A673 (cell line): ENCODE measurements at regions of chr7 and their contacts with region 1.

Region 1: GRCh38 chr7:120725376-120726039 is 132.4 kb downstream of the TSPAN12 start:
- DNase-seq: peak; percentile 65
- H3K4me3 ChIP-seq: no peak overlapping the region
- H3K27ac ChIP-seq: no peak overlapping the region
- H3K4me1 ChIP-seq: no peaks in the 10 kb centered on the region
- H3K27me3 ChIP-seq: no peaks in the 10 kb centered on the region
- CTCF ChIP-seq: peak; percentile 70

Region 2: DNA sequence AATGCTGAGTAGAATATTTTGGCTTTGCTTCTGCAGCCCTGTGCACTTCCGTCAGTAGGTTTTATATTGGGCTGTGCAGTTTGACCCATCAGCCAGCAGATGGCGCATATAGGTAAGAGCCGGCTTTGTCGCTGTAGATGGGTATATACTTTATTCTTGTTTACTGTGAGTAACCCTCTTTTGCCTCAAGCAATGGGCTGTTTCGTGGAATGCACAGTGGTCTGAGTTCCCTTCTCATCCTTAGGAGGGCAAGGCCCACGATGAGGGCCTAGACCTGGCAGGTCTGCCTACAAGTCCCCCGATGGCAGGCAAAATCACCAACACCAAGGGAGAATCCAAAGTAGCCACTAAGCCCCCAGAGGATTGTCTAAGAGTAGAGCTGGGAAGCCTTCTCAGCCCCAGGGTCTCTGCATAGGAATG is 1455.5 kb before region 1 on chr7:
- CTCF ChIA-PET with region 1: no interaction called
- POLR2A ChIA-PET with region 1: no interaction called
- intact Hi-C with region 1: loop called (anchors 10 kb)
- DNase-seq: peak; percentile 78
- H3K4me3 ChIP-seq: no peak overlapping the region
- H3K27ac ChIP-seq: no peak overlapping the region
- H3K4me1 ChIP-seq: no peaks in the 10 kb centered on the region
- H3K27me3 ChIP-seq: no peaks in the 10 kb centered on the region
- CTCF ChIP-seq: peak; percentile 88

Region 3: GRCh38 chr7:119935418-119936025 is 790.0 kb before region 1 on chr7:
- CTCF ChIA-PET with region 1: no interaction called
- POLR2A ChIA-PET with region 1: no interaction called
- intact Hi-C with region 1: loop called (anchors 10 kb)
- DNase-seq: peak; percentile 52
- H3K4me3 ChIP-seq: no peak overlapping the region
- H3K27ac ChIP-seq: no peak overlapping the region
- H3K4me1 ChIP-seq: no peaks in the 10 kb centered on the region
- H3K27me3 ChIP-seq: no peaks in the 10 kb centered on the region
- CTCF ChIP-seq: peak; percentile 65

Region 4: DNA sequence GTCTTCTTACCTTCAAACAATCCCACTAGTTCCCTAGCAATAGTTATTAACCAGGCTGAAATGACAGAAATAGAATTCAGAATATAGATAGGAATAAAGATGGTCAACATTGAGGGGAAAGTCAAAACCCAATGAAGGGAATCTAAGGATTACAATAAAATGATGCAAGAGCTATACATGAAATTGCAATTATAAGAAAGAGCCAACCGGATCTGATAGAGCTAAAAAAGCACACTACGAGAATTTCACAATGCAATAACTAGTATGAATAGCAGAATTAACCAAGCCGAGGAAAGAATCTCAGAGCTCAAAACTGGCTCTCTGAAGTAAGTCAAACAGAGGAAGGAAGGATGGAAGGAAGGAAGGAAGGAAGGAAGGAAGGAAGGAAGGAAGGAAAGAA is 741.3 kb before region 1 on chr7:
- CTCF ChIA-PET with region 1: no interaction called
- POLR2A ChIA-PET with region 1: interaction called, 10 read pairs
- intact Hi-C with region 1: no loop called
- DNase-seq: no peak
- H3K4me3 ChIP-seq: no peak overlapping the region
- H3K27ac ChIP-seq: no peak overlapping the region
- H3K4me1 ChIP-seq: no peaks in the 10 kb centered on the region
- H3K27me3 ChIP-seq: no peaks in the 10 kb centered on the region
- CTCF ChIP-seq: no peak

Region 5: GRCh38 chr7:120272261-120272660 is 453.2 kb before region 1 on chr7:
- CTCF ChIA-PET with region 1: no interaction called
- POLR2A ChIA-PET with region 1: no interaction called
- intact Hi-C with region 1: loop called (anchors 10 kb)
- DNase-seq: peak; percentile 60
- H3K4me3 ChIP-seq: peak overlapping the region; percentile 32
- H3K27ac ChIP-seq: no peak overlapping the region
- H3K4me1 ChIP-seq: peaks cover 4% of the 10 kb centered on the region
- H3K27me3 ChIP-seq: peaks cover 19% of the 10 kb centered on the region
- CTCF ChIP-seq: peak; percentile 75

Region 6: DNA sequence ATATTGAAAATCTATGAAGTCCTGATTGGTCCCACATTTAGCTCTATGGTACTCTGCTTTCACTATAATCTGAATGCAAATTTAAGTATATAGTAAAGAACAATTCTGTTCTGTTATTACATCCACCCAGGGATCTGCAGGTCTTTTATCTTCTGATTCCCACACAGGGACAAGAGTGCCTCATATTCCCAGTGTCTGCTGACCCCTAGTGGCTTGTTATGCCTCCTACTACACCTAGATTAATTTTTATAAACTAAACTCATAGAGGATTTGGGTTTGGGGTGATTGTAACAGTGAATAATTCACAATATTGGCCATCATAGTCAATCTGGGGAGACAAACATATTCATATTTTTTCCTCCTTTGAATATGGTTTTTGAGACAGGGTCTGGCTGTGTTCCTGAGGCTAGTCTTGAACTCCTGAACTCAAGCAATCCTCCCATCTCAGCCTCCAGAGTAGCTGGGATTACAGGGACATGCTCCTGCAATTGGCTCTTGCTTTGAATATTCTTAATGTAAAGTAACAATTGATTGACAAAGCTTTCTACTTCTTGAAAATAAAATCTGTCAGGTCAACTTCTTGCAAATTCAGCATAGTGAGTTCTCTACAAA is 170.4 kb before region 1 on chr7:
- CTCF ChIA-PET with region 1: no interaction called
- POLR2A ChIA-PET with region 1: no interaction called
- intact Hi-C with region 1: loop called (anchors 5 kb)
- DNase-seq: peak; percentile 71
- H3K4me3 ChIP-seq: no peak overlapping the region
- H3K27ac ChIP-seq: no peak overlapping the region
- H3K4me1 ChIP-seq: peaks cover 16% of the 10 kb centered on the region
- H3K27me3 ChIP-seq: no peaks in the 10 kb centered on the region
- CTCF ChIP-seq: peak; percentile 81

Region 7: DNA sequence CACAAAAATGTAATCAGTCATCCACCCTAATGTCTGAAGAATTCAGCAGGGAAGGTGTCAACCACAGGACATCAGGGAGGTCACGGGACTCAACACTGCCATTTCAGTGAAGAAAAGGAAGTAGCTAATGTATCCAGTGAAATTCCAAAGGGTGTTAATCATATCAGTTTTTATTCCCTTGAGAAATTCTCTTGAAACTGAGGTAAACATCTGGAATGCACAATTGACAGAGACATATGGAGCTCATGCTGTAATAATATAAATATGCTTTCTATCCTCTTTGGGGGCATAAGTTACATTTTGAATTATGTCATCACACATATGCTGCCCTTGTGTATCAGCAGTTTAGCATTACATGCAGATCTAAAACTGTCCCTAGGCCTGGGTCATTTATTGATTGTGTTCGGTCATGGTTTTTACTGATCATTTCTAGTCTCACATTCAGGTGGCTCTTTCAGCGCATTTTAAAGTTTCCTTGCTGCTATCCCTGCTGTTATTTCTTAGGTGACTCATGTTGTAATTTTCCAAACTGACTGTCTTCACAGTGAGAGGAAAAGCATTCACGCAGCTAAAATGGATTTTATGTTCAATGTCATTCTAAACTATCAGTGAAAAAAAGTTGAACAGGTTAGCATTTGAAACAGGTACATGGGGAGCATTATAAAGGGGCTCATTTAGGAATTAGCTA is 141.5 kb before region 1 on chr7:
- CTCF ChIA-PET with region 1: no interaction called
- POLR2A ChIA-PET with region 1: no interaction called
- intact Hi-C with region 1: loop called (anchors 10 kb)
- DNase-seq: peak; percentile 41
- H3K4me3 ChIP-seq: no peak overlapping the region
- H3K27ac ChIP-seq: no peak overlapping the region
- H3K4me1 ChIP-seq: peaks cover 11% of the 10 kb centered on the region
- H3K27me3 ChIP-seq: no peaks in the 10 kb centered on the region
- CTCF ChIP-seq: no peak